CD4-positive, alpha-beta T cell (primary cell): ENCODE measurements at regions of chr19 and their contacts with region 1.

Region 1: GRCh38 chr19:19821366-19821951 is at the start of gene ZNF506:
- DNase-seq: peak; percentile 95 to 99 (median 97)
- ATAC-seq: peak; percentile 79
- H3K4me3 ChIP-seq: peak within 1 kb of the TSS; percentile 62
- H3K4me3 Mint-ChIP-seq: peak within 1 kb of the TSS; percentile 99
- H3K27ac ChIP-seq: peak within 1 kb of the TSS; percentile 97
- H3K27ac Mint-ChIP-seq: peak within 1 kb of the TSS; percentile 86
- H3K4me1 ChIP-seq: peaks cover 45% of the 10 kb centered on the region
- H3K4me1 Mint-ChIP-seq: peaks cover 44% of the 10 kb centered on the region
- H3K27me3 ChIP-seq: no peaks in the 10 kb centered on the region
- H3K27me3 Mint-ChIP-seq: no peaks in the 10 kb centered on the region
- CTCF ChIP-seq: no peak
- total RNA-seq, gene ZNF506: 48.0 to 50.7 TPM

Region 2: DNA sequence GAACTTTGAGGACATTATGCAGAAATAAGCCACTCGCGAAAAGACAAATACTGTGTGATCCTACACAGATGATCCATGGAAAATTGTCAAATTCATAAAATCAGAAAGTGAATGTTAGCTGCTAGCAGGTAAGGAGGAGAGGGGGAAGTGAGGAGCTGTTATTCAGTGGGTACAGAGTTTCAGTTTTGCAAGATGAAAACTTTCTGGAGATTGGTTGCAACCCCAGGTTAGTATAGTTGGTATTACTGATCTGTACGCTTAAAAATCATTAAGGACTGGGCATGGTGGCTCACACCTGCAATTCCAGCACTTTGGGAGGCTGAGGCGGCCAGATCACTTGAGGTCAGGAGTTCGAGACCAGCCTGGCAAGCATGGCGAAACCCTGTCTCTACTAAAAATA is 134.9 kb before region 1 on chr19:
- CTCF ChIA-PET with region 1: no interaction called
- POLR2A ChIA-PET with region 1: interaction called, 14 read pairs
- intact Hi-C with region 1: no loop called
- DNase-seq: no peak
- ATAC-seq: peak; percentile 28
- H3K4me3 ChIP-seq: no peak overlapping the region
- H3K4me3 Mint-ChIP-seq: no peak overlapping the region
- H3K27ac ChIP-seq: no peak overlapping the region
- H3K27ac Mint-ChIP-seq: no peak overlapping the region
- H3K4me1 ChIP-seq: no peaks in the 10 kb centered on the region
- H3K4me1 Mint-ChIP-seq: no peaks in the 10 kb centered on the region
- H3K27me3 ChIP-seq: no peaks in the 10 kb centered on the region
- H3K27me3 Mint-ChIP-seq: no peaks in the 10 kb centered on the region
- CTCF ChIP-seq: no peak

Region 3: DNA sequence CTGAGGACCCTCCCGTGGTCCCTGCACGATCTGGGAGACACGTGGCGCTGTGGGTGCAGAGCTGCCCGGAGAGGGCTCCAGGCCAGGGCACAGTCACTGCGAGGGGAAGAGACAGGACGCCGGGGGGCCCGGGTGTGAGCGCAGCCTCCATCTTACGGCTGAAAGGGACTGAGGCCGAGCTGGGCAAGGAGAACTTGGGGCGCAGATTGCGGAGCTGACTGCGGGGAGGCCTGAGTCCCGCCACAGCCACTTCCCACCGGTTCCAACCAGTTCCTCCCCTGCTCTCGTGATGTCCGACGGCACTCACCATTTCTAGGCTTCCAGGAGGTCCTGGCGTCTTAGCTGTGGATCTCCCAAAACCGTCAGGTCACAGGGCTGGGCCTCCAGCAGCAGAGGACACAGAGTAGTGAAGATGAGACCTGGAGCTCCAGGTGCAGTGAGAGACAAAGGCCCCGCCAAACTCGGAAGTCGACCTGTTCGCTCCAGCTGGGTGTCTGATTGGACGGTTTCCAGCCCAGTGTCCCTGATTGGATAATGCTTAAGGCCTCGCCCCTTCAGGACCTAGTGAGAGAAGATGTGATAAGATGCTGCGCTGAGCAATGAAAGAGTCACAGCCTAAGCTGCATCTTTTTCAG is 39.4 kb after region 1 on chr19:
- CTCF ChIA-PET with region 1: interaction called, 3 read pairs
- POLR2A ChIA-PET with region 1: interaction called, 160 read pairs
- intact Hi-C with region 1: loop called (anchors 1 to 2 kb)
- DNase-seq: peak in 11 of 14 experiments; percentile 2 to 87 (median 52)
- ATAC-seq: peak; percentile 67
- H3K4me3 ChIP-seq: peak overlapping the region; percentile 25
- H3K4me3 Mint-ChIP-seq: peak overlapping the region; percentile 68
- H3K27ac ChIP-seq: no peak overlapping the region
- H3K27ac Mint-ChIP-seq: peak overlapping the region; percentile 0
- H3K4me1 ChIP-seq: peaks cover 12% of the 10 kb centered on the region
- H3K4me1 Mint-ChIP-seq: peaks cover 8% of the 10 kb centered on the region
- H3K27me3 ChIP-seq: no peaks in the 10 kb centered on the region
- H3K27me3 Mint-ChIP-seq: no peaks in the 10 kb centered on the region
- CTCF ChIP-seq: no peak

Region 4: GRCh38 chr19:19871932-19872331 is 50.5 kb after region 1 on chr19:
- CTCF ChIA-PET with region 1: no interaction called
- POLR2A ChIA-PET with region 1: interaction called, 160 read pairs
- intact Hi-C with region 1: no loop called
- DNase-seq: no peak
- ATAC-seq: no peak
- H3K4me3 ChIP-seq: no peak overlapping the region
- H3K4me3 Mint-ChIP-seq: peak overlapping the region; percentile 0
- H3K27ac ChIP-seq: no peak overlapping the region
- H3K27ac Mint-ChIP-seq: peak overlapping the region; percentile 75
- H3K4me1 ChIP-seq: peaks cover 13% of the 10 kb centered on the region
- H3K4me1 Mint-ChIP-seq: peaks cover 57% of the 10 kb centered on the region
- H3K27me3 ChIP-seq: no peaks in the 10 kb centered on the region
- H3K27me3 Mint-ChIP-seq: no peaks in the 10 kb centered on the region
- CTCF ChIP-seq: no peak

Region 5: DNA sequence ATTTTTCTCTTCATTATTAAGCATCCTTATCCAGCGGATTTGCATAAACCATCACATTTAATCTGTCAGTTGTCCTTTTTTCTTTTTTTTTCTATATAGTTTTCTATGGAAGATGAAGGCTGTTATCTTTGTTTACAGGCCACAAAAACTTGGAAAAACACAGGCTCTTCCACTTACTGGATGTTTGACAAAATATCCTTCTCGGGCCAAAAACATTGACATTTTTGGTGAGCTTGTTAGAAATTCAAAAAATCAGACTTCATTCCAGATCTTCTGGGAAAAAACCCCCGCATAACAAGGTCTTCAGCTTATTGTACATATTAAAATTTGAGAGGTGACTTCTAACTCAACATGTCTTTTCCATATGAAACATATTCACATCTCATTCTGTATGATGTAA is 93.1 kb after region 1 on chr19:
- CTCF ChIA-PET with region 1: no interaction called
- POLR2A ChIA-PET with region 1: no interaction called
- intact Hi-C with region 1: no loop called
- DNase-seq: no peak
- ATAC-seq: no peak
- H3K4me3 ChIP-seq: no peak overlapping the region
- H3K4me3 Mint-ChIP-seq: no peak overlapping the region
- H3K27ac ChIP-seq: no peak overlapping the region
- H3K27ac Mint-ChIP-seq: no peak overlapping the region
- H3K4me1 ChIP-seq: no peaks in the 10 kb centered on the region
- H3K4me1 Mint-ChIP-seq: peaks cover 12% of the 10 kb centered on the region
- H3K27me3 ChIP-seq: no peaks in the 10 kb centered on the region
- H3K27me3 Mint-ChIP-seq: no peaks in the 10 kb centered on the region
- CTCF ChIP-seq: no peak

Region 6: GRCh38 chr19:20278342-20278741 is 456.9 kb after region 1 on chr19:
- CTCF ChIA-PET with region 1: no interaction called
- POLR2A ChIA-PET with region 1: no interaction called
- intact Hi-C with region 1: no loop called
- DNase-seq: peak in 3 of 14 experiments; percentile 18 to 65 (median 51)
- ATAC-seq: no peak
- H3K4me3 ChIP-seq: no peak overlapping the region
- H3K4me3 Mint-ChIP-seq: no peak overlapping the region
- H3K27ac ChIP-seq: no peak overlapping the region
- H3K27ac Mint-ChIP-seq: no peak overlapping the region
- H3K4me1 ChIP-seq: no peaks in the 10 kb centered on the region
- H3K4me1 Mint-ChIP-seq: no peaks in the 10 kb centered on the region
- H3K27me3 ChIP-seq: no peaks in the 10 kb centered on the region
- H3K27me3 Mint-ChIP-seq: no peaks in the 10 kb centered on the region
- CTCF ChIP-seq: no peak